H1 (cell line): ENCODE measurements at regions of chr17 and their contacts with region 1.

Region 1: DNA sequence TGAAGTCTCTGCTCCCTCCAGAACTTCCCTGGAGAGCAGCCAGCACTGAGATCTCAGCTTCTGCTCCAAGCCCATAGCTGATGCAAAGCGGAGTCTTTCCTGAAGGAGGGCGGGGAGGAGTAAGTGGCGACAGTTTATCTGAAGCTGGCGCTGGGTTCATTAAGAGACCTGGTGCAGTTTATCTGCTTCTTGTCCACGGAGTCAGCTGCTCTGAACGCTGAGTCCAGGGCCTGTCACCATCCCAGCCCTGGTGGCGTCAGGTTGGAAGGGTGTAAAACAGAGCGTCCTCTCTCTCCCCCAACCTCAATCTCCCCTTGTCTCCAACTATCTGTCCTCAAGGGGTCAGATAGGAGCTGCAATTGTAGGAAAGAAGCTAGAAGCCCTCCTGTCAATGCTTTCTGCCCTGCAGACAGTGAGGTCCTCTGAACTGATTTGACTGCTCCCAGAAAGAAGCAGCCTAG is 29.8 kb downstream of the HOXB1 start:
- DNase-seq: no peak
- H3K4me3 ChIP-seq: no peak overlapping the region
- H3K27ac ChIP-seq: no peak overlapping the region
- H3K4me1 ChIP-seq: peaks cover 0 to 4% (median 2%) of the 10 kb centered on the region in 4 experiments; a peak in 4 of 7 replicates
- H3K27me3 ChIP-seq: peaks cover 0 to 18% (median 14%) of the 10 kb centered on the region in 4 experiments; a peak in 5 of 7 replicates
- CTCF ChIP-seq: peak in 2 of 3 experiments; percentile 60 to 66; a peak in 3 of 4 replicates
- EP300 ChIP-seq: no peak
- POLR2A ChIP-seq: no peak
- RAD21 ChIP-seq: peak; percentile 71 to 78

Region 2: GRCh38 chr17:48420823-48421222 is 80.2 kb before region 1 on chr17:
- CTCF ChIA-PET with region 1: no interaction called
- POLR2A ChIA-PET with region 1: no interaction called
- DNase-seq: no peak
- H3K4me3 ChIP-seq: no peak overlapping the region
- H3K27ac ChIP-seq: no peak overlapping the region
- H3K4me1 ChIP-seq: peaks cover 0 to 8% (median 6%) of the 10 kb centered on the region in 4 experiments; a peak in 3 of 7 replicates
- H3K27me3 ChIP-seq: no peaks in the 10 kb centered on the region; a peak in 1 of 7 replicates
- CTCF ChIP-seq: no peak
- EP300 ChIP-seq: no peak
- POLR2A ChIP-seq: no peak
- RAD21 ChIP-seq: no peak

Region 3: DNA sequence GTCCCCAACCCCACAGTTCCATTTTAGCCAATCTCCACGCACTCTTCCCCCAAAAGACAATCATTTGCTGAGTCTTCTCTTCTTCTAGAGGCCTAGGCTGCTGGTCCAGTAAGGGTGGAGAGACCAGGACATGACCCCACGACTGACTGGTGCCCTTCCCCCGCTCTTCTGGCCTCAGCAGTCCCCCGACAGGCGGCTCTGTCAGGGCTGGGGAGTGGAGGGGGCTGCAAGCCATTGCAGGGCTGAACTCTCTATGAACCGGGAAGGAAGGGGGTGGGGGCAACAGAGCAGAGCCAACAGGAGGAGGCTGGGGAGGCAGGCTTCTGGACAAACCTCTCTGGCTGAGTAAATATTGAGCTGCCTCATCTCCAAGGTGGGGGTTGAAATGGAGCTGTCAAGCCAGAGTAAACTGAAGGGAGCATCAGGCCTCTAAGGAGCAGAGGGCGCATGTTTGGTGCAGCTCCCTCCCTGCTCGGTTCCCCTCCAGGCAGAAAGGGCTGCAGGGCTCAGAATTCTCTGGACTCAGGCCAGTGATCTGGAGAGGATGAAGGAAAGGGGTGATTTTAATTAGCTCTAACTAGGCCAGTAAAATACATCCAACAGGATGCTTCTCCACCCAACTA is 21.1 kb after region 1 on chr17:
- CTCF ChIA-PET with region 1: interaction called, 21 read pairs
- POLR2A ChIA-PET with region 1: interaction called, 3 read pairs
- DNase-seq: no peak
- H3K4me3 ChIP-seq: no peak overlapping the region
- H3K27ac ChIP-seq: no peak overlapping the region
- H3K4me1 ChIP-seq: peaks cover 5 to 14% (median 7%) of the 10 kb centered on the region in 4 experiments
- H3K27me3 ChIP-seq: peaks cover 35 to 78% (median 73%) of the 10 kb centered on the region in 4 experiments
- CTCF ChIP-seq: no peak
- EP300 ChIP-seq: no peak
- POLR2A ChIP-seq: no peak
- RAD21 ChIP-seq: no peak

Region 4: GRCh38 chr17:48541577-48542113 is 40.6 kb after region 1 on chr17:
- CTCF ChIA-PET with region 1: interaction called, 14 read pairs
- POLR2A ChIA-PET with region 1: no interaction called
- DNase-seq: peak in 1 of 2 experiments; percentile 67
- H3K4me3 ChIP-seq: peak overlapping the region; percentile 23 to 56 (median 37); a peak in 7 of 8 replicates
- H3K27ac ChIP-seq: no peak overlapping the region
- H3K4me1 ChIP-seq: peaks cover 0 to 13% (median 8%) of the 10 kb centered on the region in 4 experiments; a peak in 6 of 7 replicates
- H3K27me3 ChIP-seq: peaks cover 68 to 84% (median 80%) of the 10 kb centered on the region in 4 experiments
- CTCF ChIP-seq: no peak
- EP300 ChIP-seq: no peak
- POLR2A ChIP-seq: no peak
- RAD21 ChIP-seq: no peak